Naive thymus-derived CD4-positive, alpha-beta T cell (primary cell): ENCODE measurements at regions of chr10 and their contacts with region 1.

Region 1: DNA sequence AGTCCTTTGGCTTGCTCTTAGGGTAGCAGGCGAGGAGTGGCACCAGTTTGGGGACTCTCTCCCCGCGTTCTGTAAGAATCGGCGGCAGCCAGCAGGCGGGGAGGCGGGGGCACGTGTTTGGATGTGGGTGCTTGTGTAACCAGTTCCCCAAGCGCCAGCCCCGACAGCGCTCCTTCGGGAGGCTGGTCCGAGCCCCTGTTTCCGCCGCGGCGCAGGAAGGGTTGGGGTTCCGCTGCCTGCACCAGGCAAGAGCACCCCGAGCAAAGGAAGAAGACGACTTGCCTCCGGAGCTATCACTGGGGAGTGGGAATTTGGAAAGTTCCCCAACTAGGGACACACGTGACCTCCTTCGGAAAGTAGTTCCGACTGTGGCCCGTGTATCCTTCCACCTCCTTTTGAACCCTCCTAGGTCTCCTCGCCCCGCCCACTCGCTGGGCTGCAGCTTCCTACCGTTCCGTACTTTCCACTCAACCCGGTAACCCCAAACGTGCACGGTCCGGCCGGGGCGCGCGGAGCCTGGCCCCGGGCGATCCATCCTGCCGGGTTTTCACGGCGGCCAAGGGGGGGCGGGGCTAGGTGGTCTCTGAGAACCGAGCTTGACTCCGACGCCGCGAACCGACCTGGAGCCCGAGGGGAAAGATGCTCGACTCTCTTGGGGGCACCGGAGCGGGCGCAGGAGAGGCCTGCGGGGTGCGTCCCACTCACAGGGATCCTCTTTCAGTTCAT is 1.2 kb downstream of the KLLN start:
- DNase-seq: peak; percentile 85 to 95 (median 93)
- ATAC-seq: peak; percentile 86
- H3K4me3 ChIP-seq: peak overlapping the region; percentile 90
- H3K4me3 Mint-ChIP-seq: peak overlapping the region; percentile 91 to 100 (median 96)
- H3K27ac ChIP-seq: peak overlapping the region; percentile 75
- H3K27ac Mint-ChIP-seq: peak overlapping the region; percentile 90 to 99 (median 97)
- H3K4me1 ChIP-seq: peaks cover 6 to 16% of the 10 kb centered on the region in 2 donors
- H3K4me1 Mint-ChIP-seq: peaks cover 25 to 36% (median 32%) of the 10 kb centered on the region in 7 donors
- H3K27me3 ChIP-seq: no peaks in the 10 kb centered on the region
- H3K27me3 Mint-ChIP-seq: no peaks in the 10 kb centered on the region

Region 2: GRCh38 chr10:87878664-87879459 is 16.7 kb after region 1 on chr10:
- CTCF ChIA-PET with region 1: interaction called, 4 read pairs
- POLR2A ChIA-PET with region 1: interaction called, 22 read pairs
- intact Hi-C with region 1: no loop called
- DNase-seq: no peak
- ATAC-seq: peak; percentile 32
- H3K4me3 ChIP-seq: no peak overlapping the region
- H3K4me3 Mint-ChIP-seq: peak overlapping the region in 8 of 10 donors; percentile 1 to 58 (median 16)
- H3K27ac ChIP-seq: no peak overlapping the region
- H3K27ac Mint-ChIP-seq: peak overlapping the region in 6 of 9 donors; percentile 5 to 51 (median 10)
- H3K4me1 ChIP-seq: peaks cover 11 to 14% of the 10 kb centered on the region in 2 donors
- H3K4me1 Mint-ChIP-seq: peaks cover 35 to 91% (median 75%) of the 10 kb centered on the region in 7 donors
- H3K27me3 ChIP-seq: no peaks in the 10 kb centered on the region
- H3K27me3 Mint-ChIP-seq: no peaks in the 10 kb centered on the region

Region 3: GRCh38 chr10:87956055-87956454 is 93.9 kb after region 1 on chr10:
- CTCF ChIA-PET with region 1: no interaction called
- POLR2A ChIA-PET with region 1: no interaction called
- intact Hi-C with region 1: no loop called
- DNase-seq: no peak
- ATAC-seq: no peak
- H3K4me3 ChIP-seq: no peak overlapping the region
- H3K4me3 Mint-ChIP-seq: no peak overlapping the region
- H3K27ac ChIP-seq: no peak overlapping the region
- H3K27ac Mint-ChIP-seq: peak overlapping the region in 2 of 9 donors; percentile 41 to 72
- H3K4me1 ChIP-seq: no peaks in the 10 kb centered on the region
- H3K4me1 Mint-ChIP-seq: peaks cover 6 to 52% (median 35%) of the 10 kb centered on the region in 7 donors
- H3K27me3 ChIP-seq: no peaks in the 10 kb centered on the region
- H3K27me3 Mint-ChIP-seq: no peaks in the 10 kb centered on the region

Region 4: DNA sequence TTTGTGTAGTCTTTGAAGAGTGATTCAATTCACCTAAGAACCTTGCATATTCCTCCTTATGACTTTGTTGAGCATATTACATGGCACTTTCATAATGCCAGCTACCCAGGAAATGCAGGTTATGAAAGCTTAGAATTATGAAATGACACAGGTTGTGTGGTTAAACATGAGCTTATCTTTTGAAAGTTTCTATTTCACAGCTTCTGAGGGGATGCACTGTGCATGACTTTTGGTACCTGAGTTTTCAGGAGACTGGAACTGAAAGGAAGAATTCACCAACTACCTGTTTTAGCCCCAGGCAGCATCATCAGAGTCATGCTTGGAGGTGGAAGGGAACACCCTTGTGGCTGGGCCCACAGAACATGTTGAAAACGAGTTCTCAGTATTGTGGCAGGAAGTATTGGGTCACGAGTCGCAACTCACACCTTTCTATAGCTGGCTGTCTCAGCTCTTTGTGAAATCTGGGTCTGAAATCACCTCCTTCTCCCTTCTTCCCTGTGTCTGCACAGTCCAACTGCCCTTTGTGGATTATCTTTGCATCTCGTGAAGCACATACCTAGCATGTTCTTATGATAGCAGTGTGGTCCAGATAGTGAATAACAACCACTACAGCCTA is 229.5 kb after region 1 on chr10:
- CTCF ChIA-PET with region 1: interaction called, 21 read pairs
- POLR2A ChIA-PET with region 1: interaction called, 37 read pairs
- intact Hi-C with region 1: loop called (anchors 1 kb)
- DNase-seq: peak in 8 of 9 donors; percentile 64 to 85 (median 76)
- ATAC-seq: peak; percentile 95
- H3K4me3 ChIP-seq: no peak overlapping the region
- H3K4me3 Mint-ChIP-seq: peak overlapping the region; percentile 18 to 72 (median 52)
- H3K27ac ChIP-seq: peak overlapping the region; percentile 53
- H3K27ac Mint-ChIP-seq: peak overlapping the region; percentile 76 to 94 (median 90)
- H3K4me1 ChIP-seq: peaks cover 33 to 36% of the 10 kb centered on the region in 2 donors
- H3K4me1 Mint-ChIP-seq: peaks cover 35 to 64% (median 42%) of the 10 kb centered on the region in 7 donors
- H3K27me3 ChIP-seq: no peaks in the 10 kb centered on the region
- H3K27me3 Mint-ChIP-seq: peaks cover 0 to 49% (median 0%) of the 10 kb centered on the region in 5 donors

Region 5: GRCh38 chr10:88386821-88387773 is 525.0 kb after region 1 on chr10:
- CTCF ChIA-PET with region 1: interaction called, 108 read pairs
- POLR2A ChIA-PET with region 1: interaction called, 104 read pairs
- intact Hi-C with region 1: loop called (anchors 1 kb)
- DNase-seq: peak in 7 of 9 donors; percentile 45 to 66 (median 54)
- ATAC-seq: peak; percentile 57
- H3K4me3 ChIP-seq: peak overlapping the region; percentile 45
- H3K4me3 Mint-ChIP-seq: no peak overlapping the region
- H3K27ac ChIP-seq: peak overlapping the region; percentile 82
- H3K27ac Mint-ChIP-seq: no peak overlapping the region
- H3K4me1 ChIP-seq: peaks cover 44 to 69% of the 10 kb centered on the region in 2 donors
- H3K4me1 Mint-ChIP-seq: peaks cover 6 to 41% (median 37%) of the 10 kb centered on the region in 7 donors
- H3K27me3 ChIP-seq: no peaks in the 10 kb centered on the region
- H3K27me3 Mint-ChIP-seq: no peaks in the 10 kb centered on the region

Region 6: DNA sequence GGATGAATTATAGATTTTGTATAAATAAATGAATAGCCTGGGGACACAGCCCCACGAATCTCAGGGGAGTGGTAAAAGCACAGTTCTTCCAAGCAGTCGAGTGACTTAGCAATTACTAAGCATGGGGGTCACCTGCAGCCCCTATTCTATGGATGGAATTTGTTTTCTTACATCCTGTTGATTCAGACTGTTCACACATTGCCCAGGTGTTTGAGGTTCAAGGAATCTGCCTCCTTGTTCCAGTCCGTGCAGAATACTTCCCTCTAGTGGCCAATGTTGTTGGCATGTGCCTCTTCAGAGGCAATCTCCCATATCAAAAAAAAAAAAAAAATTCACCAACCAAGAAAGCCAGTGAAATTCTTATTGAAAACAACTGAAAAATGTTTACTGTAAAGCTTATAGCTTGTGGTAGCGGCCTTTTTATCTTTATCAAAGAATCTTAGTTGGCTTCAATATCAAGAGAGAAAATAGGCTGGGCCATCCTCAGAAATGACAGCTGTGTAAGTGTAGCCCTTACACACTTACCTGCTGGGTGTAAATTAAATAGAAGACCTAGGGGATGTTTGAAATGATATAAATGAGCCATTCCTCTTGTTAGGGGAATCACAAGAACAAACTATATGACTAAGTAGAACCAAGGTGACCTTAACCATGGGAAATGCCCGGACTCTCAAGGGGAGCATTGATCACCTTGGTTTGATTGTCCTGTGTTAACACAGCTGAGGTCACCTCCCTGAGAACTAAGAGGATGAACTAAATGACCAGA is 948.3 kb after region 1 on chr10:
- CTCF ChIA-PET with region 1: no interaction called
- POLR2A ChIA-PET with region 1: interaction called, 4 read pairs
- intact Hi-C with region 1: loop called in 1 of 2 experiments (anchors 5 kb)
- DNase-seq: peak in 7 of 9 donors; percentile 15 to 58 (median 48)
- ATAC-seq: peak; percentile 92
- H3K4me3 ChIP-seq: no peak overlapping the region
- H3K4me3 Mint-ChIP-seq: no peak overlapping the region
- H3K27ac ChIP-seq: no peak overlapping the region
- H3K27ac Mint-ChIP-seq: peak overlapping the region in 1 of 9 donors; percentile 35
- H3K4me1 ChIP-seq: peaks cover 0 to 2% of the 10 kb centered on the region in 2 donors
- H3K4me1 Mint-ChIP-seq: peaks cover 13 to 34% (median 23%) of the 10 kb centered on the region in 7 donors
- H3K27me3 ChIP-seq: no peaks in the 10 kb centered on the region
- H3K27me3 Mint-ChIP-seq: peaks cover 0 to 29% (median 0%) of the 10 kb centered on the region in 5 donors

Region 7: GRCh38 chr10:89251409-89252224 is 1389.5 kb after region 1 on chr10 and contains the start of gene LIPA:
- CTCF ChIA-PET with region 1: no interaction called
- POLR2A ChIA-PET with region 1: interaction called, 3 read pairs
- intact Hi-C with region 1: loop called in 1 of 2 experiments (anchors 5 kb)
- DNase-seq: peak; percentile 78 to 97 (median 94)
- ATAC-seq: peak; percentile 97
- H3K4me3 ChIP-seq: peak within 1 kb of the TSS; percentile 80
- H3K4me3 Mint-ChIP-seq: peak within 1 kb of the TSS; percentile 82 to 91 (median 90)
- H3K27ac ChIP-seq: peak within 1 kb of the TSS; percentile 76
- H3K27ac Mint-ChIP-seq: peak within 1 kb of the TSS; percentile 38 to 90 (median 84)
- H3K4me1 ChIP-seq: peaks cover 8 to 9% of the 10 kb centered on the region in 2 donors
- H3K4me1 Mint-ChIP-seq: peaks cover 17 to 32% (median 22%) of the 10 kb centered on the region in 7 donors
- H3K27me3 ChIP-seq: no peaks in the 10 kb centered on the region
- H3K27me3 Mint-ChIP-seq: peaks cover 0 to 9% (median 0%) of the 10 kb centered on the region in 5 donors
- total RNA-seq, gene LIPA: 19.9 to 49.9 (median 48.3) TPM